ENCODE measurements at regions of chr16 and their contacts with region 1.

Region 1: GRCh38 chr16:56931892-56932720 is at the start of gene HERPUD1:
- DNase-seq: peak; percentile 100
- ATAC-seq: peak; percentile 94
- H3K4me3 Mint-ChIP-seq: peak within 1 kb of the TSS; percentile 98
- H3K27ac Mint-ChIP-seq: peak within 1 kb of the TSS; percentile 95
- H3K4me1 Mint-ChIP-seq: peaks cover 40% of the 10 kb centered on the region
- H3K27me3 Mint-ChIP-seq: no peaks in the 10 kb centered on the region
- total RNA-seq, gene HERPUD1: 136 to 195 TPM

Region 2: GRCh38 chr16:56191156-56191815 is 740.8 kb before region 1 on chr16 and contains the start of gene GNAO1:
- CTCF ChIA-PET with region 1: no interaction called
- POLR2A ChIA-PET with region 1: no interaction called
- intact Hi-C with region 1: loop called in 1 of 2 experiments (anchors 10 kb)
- DNase-seq: peak; percentile 79
- ATAC-seq: peak; percentile 73
- H3K4me3 Mint-ChIP-seq: peak within 1 kb of the TSS; percentile 69
- H3K27ac Mint-ChIP-seq: no peak within 1 kb of the TSS
- H3K4me1 Mint-ChIP-seq: peaks cover 31% of the 10 kb centered on the region
- H3K27me3 Mint-ChIP-seq: peaks cover 60% of the 10 kb centered on the region
- total RNA-seq, gene GNAO1: 1.5 to 2.3 TPM

Region 3: DNA sequence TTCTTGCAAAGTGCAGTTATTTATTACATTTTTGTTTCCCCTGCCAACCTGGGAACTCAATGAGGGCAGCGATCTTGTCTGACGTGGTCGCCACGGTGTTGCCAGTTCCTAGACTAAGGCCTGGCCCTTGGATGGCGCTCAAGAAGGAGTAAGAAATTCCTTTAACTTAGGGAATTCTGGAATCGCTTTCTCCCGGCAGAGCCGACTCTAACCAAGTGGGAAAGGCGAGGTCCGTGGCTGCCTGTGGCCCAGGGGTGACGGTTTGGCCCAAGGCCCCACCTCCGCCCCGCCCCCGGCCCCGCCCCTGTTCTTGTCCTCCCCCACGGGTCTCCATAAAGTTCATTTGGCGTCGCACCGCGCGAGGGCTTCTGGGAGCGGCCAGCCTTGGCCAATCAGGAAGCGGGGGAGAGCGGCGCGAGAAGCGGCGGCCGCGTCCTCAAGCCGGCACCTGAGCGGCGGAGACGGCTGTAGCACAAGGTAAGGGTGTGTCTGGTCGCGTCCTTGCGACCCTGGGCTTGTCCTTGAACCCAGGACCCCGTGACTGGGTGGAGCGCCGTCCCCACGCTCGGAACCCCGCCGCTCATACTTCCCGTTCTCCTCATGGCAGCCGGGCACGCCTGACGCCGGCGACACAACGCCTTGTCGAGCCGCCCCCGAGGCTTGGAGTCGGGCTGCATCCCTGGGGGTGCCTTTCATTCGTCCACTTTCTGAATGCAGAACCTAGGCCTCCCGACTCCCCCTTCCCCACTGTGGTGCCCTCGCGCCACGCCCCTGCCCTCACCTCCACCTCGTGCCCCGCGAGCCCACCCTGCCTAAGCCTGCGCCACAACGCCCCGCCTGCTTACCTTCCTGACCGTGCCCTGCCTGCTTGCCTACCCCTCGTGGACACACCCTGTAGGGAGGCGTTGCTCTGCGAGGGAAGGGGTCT is 202.1 kb before region 1 on chr16 and contains the start of gene NUP93:
- CTCF ChIA-PET with region 1: no interaction called
- POLR2A ChIA-PET with region 1: no interaction called
- intact Hi-C with region 1: loop called (anchors 5 kb)
- DNase-seq: peak; percentile 95
- ATAC-seq: peak; percentile 83
- H3K4me3 Mint-ChIP-seq: no peak within 1 kb of the TSS
- H3K27ac Mint-ChIP-seq: peak within 1 kb of the TSS; percentile 85
- H3K4me1 Mint-ChIP-seq: peaks cover 14% of the 10 kb centered on the region
- H3K27me3 Mint-ChIP-seq: no peaks in the 10 kb centered on the region
- total RNA-seq, gene NUP93: 131 to 154 TPM

Region 4: DNA sequence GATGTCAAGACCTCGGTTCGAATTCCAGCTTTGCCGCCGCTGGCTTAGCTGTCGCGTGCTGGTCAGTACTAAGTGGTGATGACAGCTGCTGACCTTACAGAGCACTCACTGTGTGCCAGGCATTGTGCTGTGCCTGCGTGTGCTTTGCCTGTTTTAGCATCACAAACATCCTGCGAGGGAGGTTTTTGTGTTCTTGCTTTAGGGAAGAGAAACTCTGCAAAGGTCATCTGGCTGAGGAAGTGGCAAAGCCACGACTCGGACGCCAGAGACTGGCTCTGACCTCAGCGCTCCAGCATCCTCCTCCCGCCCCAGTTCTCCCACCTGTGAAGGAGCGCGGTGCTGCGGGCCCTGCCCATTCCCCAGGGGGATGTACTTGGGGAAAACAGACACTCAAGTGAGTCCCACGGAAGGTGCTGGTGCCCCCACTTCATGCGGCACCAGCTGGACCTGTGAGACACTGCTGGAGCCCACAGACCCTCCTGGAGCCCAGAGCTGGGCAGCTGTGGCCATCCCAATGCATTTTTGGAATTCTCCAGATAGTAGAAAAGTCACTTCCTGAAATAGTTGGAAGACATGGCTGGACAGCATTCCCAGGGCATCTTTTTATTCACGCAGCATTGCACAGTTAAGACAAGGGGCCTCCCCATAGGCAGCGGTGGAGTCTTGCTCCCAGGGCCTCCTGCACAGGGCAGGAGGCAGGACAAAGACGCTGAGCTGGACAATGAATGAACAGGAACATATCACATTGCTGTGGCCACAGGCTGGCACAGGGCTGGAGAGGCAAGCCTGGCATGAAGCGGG is 20.1 kb before region 1 on chr16:
- CTCF ChIA-PET with region 1: interaction called, 4 read pairs
- POLR2A ChIA-PET with region 1: interaction called, 14 read pairs
- intact Hi-C with region 1: no loop called
- DNase-seq: no peak
- ATAC-seq: no peak
- H3K4me3 Mint-ChIP-seq: no peak overlapping the region
- H3K27ac Mint-ChIP-seq: peak overlapping the region; percentile 20
- H3K4me1 Mint-ChIP-seq: peaks cover 38% of the 10 kb centered on the region
- H3K27me3 Mint-ChIP-seq: no peaks in the 10 kb centered on the region

Region 5: DNA sequence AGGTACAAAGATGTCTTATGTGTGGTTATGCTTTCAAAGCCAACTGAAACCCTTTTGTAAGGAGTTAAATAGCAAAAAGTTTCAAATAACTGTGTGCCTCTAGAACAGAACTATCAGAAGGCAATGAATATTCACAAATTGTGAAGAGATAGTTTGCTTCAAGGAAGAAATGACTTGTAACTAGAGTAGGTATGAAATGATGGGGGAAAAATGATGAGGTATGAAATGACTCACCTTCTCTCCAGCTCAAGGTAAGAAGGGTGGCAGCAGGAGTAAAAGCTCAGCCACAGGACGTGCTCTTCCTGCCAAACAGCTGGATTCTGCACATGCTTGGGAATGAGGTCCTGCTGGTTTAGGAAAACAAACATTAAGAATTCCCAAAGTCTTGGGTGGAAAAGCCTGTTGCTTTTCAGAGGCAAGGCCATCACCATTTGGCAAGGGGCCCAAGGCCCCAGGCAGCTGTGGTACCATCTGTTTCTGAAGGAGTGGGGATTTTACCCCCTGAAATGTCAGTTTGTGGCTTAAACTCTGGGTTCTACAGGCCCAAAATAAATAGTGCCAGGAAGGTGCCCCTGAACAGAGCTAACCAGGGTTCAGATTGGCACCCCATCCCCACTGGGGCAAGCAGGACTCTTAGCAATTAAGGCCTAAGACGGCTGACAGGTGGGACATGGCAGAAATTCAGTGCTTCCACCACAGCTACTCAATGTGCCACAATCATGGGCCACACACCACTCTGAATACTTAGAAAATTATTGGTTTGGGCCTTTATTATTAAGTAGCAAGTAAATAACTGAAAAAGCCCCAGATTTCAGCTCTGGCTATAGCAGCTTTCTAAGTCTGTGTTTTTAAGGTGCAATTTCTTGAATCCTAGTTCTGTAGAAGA is 13.1 kb after region 1 on chr16:
- CTCF ChIA-PET with region 1: interaction called, 11 read pairs
- POLR2A ChIA-PET with region 1: interaction called, 27 read pairs
- intact Hi-C with region 1: loop called (anchors 1 kb)
- DNase-seq: peak; percentile 61
- ATAC-seq: peak; percentile 79
- H3K4me3 Mint-ChIP-seq: peak overlapping the region; percentile 51
- H3K27ac Mint-ChIP-seq: peak overlapping the region; percentile 91
- H3K4me1 Mint-ChIP-seq: peaks cover 63% of the 10 kb centered on the region
- H3K27me3 Mint-ChIP-seq: no peaks in the 10 kb centered on the region

Region 6: GRCh38 chr16:57013229-57013628 is 81.1 kb after region 1 on chr16:
- CTCF ChIA-PET with region 1: no interaction called
- POLR2A ChIA-PET with region 1: interaction called, 3 read pairs
- intact Hi-C with region 1: loop called in 1 of 2 experiments (anchors 5 kb)
- DNase-seq: no peak
- ATAC-seq: no peak
- H3K4me3 Mint-ChIP-seq: peak overlapping the region; percentile 19
- H3K27ac Mint-ChIP-seq: peak overlapping the region; percentile 95
- H3K4me1 Mint-ChIP-seq: peaks cover 85% of the 10 kb centered on the region
- H3K27me3 Mint-ChIP-seq: no peaks in the 10 kb centered on the region

Region 7: GRCh38 chr16:57447186-57447962 is 515.3 kb after region 1 on chr16 and contains the starts of genes CIAPIN1 and COQ9:
- CTCF ChIA-PET with region 1: no interaction called
- POLR2A ChIA-PET with region 1: no interaction called
- intact Hi-C with region 1: loop called in 1 of 2 experiments (anchors 5 kb)
- DNase-seq: peak; percentile 96
- ATAC-seq: peak; percentile 99
- H3K4me3 Mint-ChIP-seq: peak within 1 kb of the TSS; percentile 91
- H3K27ac Mint-ChIP-seq: peak within 1 kb of the TSS; percentile 85
- H3K4me1 Mint-ChIP-seq: peaks cover 32% of the 10 kb centered on the region
- H3K27me3 Mint-ChIP-seq: no peaks in the 10 kb centered on the region
- total RNA-seq, gene CIAPIN1: 41.7 to 42.6 TPM
- total RNA-seq, gene COQ9: 39.4 to 52.1 TPM

Measured in activated CD4-positive, alpha-beta T cell treated with anti-CD3 and anti-CD28 coated beads for 36 hours (primary cell).